Cardiac septum (tissue), 1 donor: ENCODE measurements at regions of chr17 and their contacts with region 1.

Region 1: GRCh38 chr17:42517516-42517915 is 18.5 kb upstream of the NAGLU start:
- DNase-seq: peak; percentile 92

Region 2: GRCh38 chr17:42322382-42323267 is 194.9 kb before region 1 on chr17:
- intact Hi-C with region 1: loop called (anchors 2 kb)
- DNase-seq: peak; percentile 95

Region 3: GRCh38 chr17:42405963-42406495 is 111.5 kb before region 1 on chr17:
- intact Hi-C with region 1: loop called (anchors 5 kb)
- DNase-seq: peak; percentile 92

Region 4: DNA sequence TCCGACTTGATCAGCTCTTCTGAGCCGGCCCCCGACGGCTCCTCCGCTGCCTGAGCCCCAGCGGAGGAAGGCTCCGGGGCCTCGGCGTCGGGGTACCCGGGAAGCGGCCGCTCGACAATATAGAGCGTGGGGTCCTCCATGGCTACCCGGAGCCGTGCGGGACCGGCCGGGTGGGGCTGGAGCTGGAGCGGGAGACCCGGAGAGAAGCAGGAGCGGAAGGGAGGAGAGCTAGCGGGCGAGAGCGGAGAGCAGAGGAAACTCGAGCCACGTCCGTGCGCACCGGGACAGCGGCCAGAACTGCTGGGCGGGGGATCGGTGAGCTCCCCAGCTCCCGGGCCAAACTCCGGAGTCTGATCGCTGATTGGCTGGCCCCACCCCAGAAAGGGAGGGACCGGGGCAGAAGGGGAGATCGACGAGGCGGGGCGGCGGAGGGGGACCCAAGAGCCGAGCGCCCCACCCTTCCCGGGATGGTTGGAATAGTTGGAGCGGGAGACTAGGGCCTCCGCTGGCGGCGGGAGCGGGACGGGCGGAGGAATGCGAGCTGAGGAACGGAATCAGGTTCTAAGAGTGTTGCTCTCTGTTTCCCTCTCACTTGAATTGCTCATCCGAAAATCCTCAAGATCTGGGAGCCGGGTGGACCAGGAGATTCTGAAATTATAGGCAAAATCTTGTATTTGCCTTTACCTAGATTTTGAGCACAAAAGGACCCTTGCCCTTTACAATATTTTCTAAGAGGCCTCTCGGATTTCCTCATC is 94.4 kb before region 1 on chr17 and contains the start of gene CAVIN1:
- intact Hi-C with region 1: loop called (anchors 5 kb)
- DNase-seq: peak; percentile 99
- total RNA-seq, gene CAVIN1: 358 TPM

Region 5: GRCh38 chr17:42436391-42436790 is 81.1 kb before region 1 on chr17:
- intact Hi-C with region 1: loop called (anchors 2 kb)
- DNase-seq: no peak

Region 6: DNA sequence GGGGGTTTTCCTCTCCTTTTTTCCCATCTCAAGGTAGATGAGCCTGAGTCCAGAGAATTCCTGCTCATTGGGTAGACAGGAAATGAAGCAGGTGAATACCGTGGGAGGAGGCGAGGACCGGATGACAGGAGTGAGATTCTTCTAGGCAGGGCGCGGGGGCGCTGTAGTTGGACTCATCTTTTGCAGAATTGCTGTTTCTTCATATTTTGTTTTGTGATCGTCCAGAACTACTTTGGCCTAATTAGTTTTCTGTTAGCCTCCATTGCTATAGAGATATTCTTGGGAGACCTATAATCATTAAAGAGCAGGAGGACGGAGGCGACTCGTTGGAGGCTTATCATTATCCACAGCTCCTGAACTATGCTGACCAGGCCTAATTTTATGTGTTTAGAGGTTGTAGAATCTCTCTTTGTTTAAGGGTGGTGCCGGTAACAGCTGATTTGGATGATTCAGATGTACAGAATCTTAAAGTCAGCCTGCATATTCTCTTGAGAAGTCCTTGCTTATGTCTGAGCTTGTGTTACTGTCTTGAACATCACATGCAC is 58.2 kb before region 1 on chr17:
- intact Hi-C with region 1: loop called (anchors 2 kb)
- DNase-seq: peak; percentile 77

Region 7: GRCh38 chr17:42502091-42502490 is 15.4 kb before region 1 on chr17:
- intact Hi-C with region 1: no loop called
- DNase-seq: no peak